Calu3 (cell line): ENCODE measurements at regions of chr19 and their contacts with region 1.

Region 1: GRCh38 chr19:45927565-45928261 is 13.1 kb upstream of the NANOS2 start:
- DNase-seq: peak; percentile 94
- H3K4me3 Mint-ChIP-seq: peak overlapping the region; percentile 27
- H3K27ac Mint-ChIP-seq: no peak overlapping the region
- H3K4me1 Mint-ChIP-seq: peaks cover 18% of the 10 kb centered on the region
- H3K27me3 Mint-ChIP-seq: peaks cover 41% of the 10 kb centered on the region
- CTCF ChIP-seq: no peak

Region 2: GRCh38 chr19:45900738-45901431 is 26.8 kb before region 1 on chr19:
- CTCF ChIA-PET with region 1: interaction called, 11 read pairs
- intact Hi-C with region 1: no loop called
- DNase-seq: no peak
- H3K4me3 Mint-ChIP-seq: no peak overlapping the region
- H3K27ac Mint-ChIP-seq: no peak overlapping the region
- H3K4me1 Mint-ChIP-seq: no peaks in the 10 kb centered on the region
- H3K27me3 Mint-ChIP-seq: peaks cover under 1% of the 10 kb centered on the region
- CTCF ChIP-seq: no peak

Region 3: DNA sequence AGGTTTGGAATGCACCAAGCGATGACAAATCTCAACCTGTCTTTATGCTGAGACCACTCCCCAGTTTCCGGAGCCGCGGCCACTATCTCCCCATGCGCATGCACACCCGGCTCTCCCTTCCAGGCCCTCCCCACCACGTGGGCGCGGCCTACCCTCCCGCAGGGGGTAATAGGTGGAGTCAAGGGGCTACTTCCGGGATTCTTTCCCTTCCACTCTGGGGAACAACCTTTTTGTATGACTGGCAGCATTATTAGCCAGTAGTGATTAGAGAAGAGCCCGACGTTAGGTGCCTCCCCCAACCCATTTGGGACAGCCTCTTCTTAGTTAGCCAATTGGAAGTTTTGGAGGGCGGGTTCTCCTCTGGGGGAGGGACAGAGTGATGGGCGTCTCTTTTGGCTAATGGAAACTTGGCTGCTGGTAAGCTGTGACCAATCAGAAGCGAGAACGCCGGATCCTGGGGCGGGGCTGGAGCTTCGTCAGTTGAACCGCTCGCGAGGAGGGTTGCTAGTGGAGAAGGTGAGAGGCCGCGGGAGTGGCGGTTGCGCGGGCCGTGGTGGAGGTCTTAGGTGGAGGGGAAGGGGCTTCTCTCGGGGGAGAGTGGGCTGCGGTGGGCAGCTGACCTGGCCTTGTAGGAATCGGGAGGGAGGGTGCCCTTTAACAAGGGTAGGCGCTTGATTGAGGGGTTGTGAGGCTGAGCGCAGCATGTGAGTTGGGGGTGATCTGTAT is 67.4 kb after region 1 on chr19 and contains the start of gene CCDC61:
- CTCF ChIA-PET with region 1: no interaction called
- intact Hi-C with region 1: no loop called
- DNase-seq: peak; percentile 97
- H3K4me3 Mint-ChIP-seq: no peak within 1 kb of the TSS
- H3K27ac Mint-ChIP-seq: no peak within 1 kb of the TSS
- H3K4me1 Mint-ChIP-seq: peaks cover 10% of the 10 kb centered on the region
- H3K27me3 Mint-ChIP-seq: peaks cover 9% of the 10 kb centered on the region
- CTCF ChIP-seq: no peak
- total RNA-seq, gene CCDC61: 31.0 and 32.7 TPM in 2 replicates